GM23248 (cell line): ENCODE measurements at regions of chr1 and their contacts with region 1.

Region 1: DNA sequence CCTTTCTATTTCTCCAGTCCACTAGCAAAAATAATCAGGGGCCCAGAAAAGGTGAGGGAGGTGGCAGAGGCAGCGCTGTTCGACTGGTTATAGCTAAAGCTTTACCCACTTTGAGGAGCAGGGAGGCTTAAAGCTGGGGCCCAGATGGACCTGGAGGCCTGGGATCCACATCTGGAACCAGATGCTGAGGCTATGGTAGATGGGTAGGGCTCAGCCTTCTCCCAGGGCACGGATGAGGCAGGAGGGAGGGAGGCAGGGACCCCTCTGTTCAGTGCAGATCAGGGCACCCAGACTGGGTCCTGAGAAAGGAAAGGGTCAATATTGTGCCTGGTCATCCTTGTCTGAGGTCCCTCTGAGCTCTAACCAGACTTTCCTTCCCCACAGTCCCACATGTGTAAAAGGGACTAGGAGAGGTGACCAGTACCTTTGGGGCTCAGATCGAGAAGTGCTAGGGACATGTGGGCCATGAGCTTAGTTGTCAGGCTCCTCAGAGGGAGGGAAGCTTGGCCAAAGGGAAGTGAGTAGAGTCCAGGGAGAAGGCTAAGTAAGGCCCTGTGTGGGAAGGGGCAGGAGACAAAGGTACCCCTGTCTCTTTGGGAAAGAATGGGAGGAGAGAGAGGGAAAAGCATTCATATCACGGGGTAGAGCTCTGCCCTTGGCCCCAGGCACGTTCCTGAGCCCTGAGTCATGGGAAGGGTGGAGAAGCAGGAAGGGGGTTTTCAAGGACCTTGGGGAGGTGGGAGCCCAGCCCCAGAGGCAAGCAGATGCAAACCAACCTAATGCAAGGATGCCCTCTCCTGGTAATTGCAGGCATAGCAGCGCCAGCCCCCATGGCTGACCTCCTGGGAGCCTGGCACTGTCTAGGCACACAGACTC is 15.4 kb downstream of the LMNA start:
- DNase-seq: peak; percentile 96
- H3K4me3 ChIP-seq: peak overlapping the region; percentile 58
- H3K27ac ChIP-seq: peak overlapping the region; percentile 100
- H3K4me1 ChIP-seq: peaks cover 49% of the 10 kb centered on the region
- H3K27me3 ChIP-seq: no peaks in the 10 kb centered on the region

Region 2: DNA sequence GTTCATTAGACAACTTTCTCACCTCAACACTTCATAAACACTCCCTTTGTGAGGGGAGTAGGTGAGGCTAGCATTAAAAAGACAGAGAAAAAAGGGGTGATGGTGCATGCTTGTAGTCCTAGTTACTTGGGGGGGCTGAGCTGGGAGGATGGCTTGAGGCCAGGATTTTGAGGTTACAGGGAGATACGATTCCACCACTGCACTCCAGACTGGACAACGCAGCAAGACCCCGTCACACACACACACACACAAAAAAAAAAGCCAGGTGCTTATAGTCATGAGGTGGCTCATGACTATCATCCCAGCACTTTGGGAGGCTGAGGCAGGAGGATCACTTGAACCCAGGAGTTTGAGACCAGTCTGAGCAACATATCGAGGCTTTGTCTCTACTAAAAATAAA is 302.5 kb before region 1 on chr1:
- in situ Hi-C with region 1: no loop called
- DNase-seq: no peak
- H3K4me3 ChIP-seq: no peak overlapping the region
- H3K27ac ChIP-seq: no peak overlapping the region
- H3K4me1 ChIP-seq: no peaks in the 10 kb centered on the region
- H3K27me3 ChIP-seq: no peaks in the 10 kb centered on the region

Region 3: DNA sequence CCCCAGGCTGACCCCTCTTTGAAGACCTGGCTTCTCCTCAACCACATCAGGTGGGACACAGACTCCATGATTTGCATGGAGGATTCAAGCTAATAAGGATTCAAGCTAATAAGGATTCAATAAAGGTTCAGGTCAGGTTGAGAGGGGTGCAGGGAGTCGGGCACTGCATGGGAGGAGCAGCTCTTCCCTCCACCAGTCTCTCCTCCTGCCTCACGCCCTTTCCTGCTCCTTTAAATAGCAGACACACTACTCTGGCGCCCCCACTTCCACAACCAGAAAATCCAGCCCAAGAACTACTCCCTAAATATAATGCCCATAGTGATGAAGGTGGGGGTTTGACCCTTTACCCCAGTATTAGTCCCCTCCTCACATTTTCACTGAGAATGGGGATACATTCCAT is 54.8 kb before region 1 on chr1:
- in situ Hi-C with region 1: no loop called
- DNase-seq: no peak
- H3K4me3 ChIP-seq: no peak overlapping the region
- H3K27ac ChIP-seq: no peak overlapping the region
- H3K4me1 ChIP-seq: no peaks in the 10 kb centered on the region
- H3K27me3 ChIP-seq: no peaks in the 10 kb centered on the region

Region 4: GRCh38 chr1:156096640-156097391 is 33.1 kb before region 1 on chr1:
- in situ Hi-C with region 1: loop called (anchors 5 kb)
- DNase-seq: peak; percentile 94
- H3K4me3 ChIP-seq: no peak overlapping the region
- H3K27ac ChIP-seq: peak overlapping the region; percentile 82
- H3K4me1 ChIP-seq: peaks cover 15% of the 10 kb centered on the region
- H3K27me3 ChIP-seq: no peaks in the 10 kb centered on the region

Region 5: DNA sequence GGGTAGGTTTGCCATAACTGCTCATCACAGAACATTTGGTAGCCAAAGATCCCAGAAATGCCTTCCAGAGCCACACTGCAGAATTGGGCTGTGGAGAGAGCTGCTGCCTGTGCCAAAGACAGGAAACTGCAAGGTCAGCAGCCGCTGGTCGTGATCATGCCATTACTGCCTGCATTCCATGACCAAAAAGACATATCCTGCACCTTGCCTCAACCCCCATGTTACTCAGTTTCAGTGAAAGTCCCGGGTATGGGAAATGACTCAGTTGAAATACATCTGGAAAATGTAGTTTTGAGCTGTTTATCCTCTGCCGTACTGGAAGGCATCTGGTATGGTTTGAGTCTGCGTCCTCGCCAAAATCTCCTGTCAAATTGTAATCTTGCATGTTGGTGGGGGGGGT is 1260.7 kb after region 1 on chr1:
- in situ Hi-C with region 1: no loop called
- DNase-seq: peak; percentile 75
- H3K4me3 ChIP-seq: no peak overlapping the region
- H3K27ac ChIP-seq: no peak overlapping the region
- H3K4me1 ChIP-seq: peaks cover 11% of the 10 kb centered on the region
- H3K27me3 ChIP-seq: no peaks in the 10 kb centered on the region

Region 6: DNA sequence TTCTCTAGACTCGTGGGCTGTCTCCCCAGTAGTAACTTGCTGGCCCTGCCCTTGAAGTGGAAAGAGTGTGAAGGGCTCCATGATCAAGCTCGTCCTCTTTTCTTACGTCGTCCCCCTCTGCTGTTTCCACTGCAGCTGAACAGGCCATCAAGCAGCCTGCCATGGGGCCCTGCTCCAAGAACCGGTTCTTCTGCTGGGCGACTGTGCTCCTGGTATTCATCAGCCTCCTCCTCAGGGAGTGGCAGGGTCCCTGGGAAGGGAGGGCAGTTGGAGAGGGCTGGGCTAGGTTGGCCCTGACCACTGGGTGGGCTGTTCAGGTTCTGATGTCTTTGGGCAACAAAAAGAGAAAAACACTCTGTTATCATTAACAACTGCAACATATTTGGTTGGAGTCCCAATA is 1270.8 kb after region 1 on chr1:
- in situ Hi-C with region 1: no loop called
- DNase-seq: no peak
- H3K4me3 ChIP-seq: no peak overlapping the region
- H3K27ac ChIP-seq: no peak overlapping the region
- H3K4me1 ChIP-seq: no peaks in the 10 kb centered on the region
- H3K27me3 ChIP-seq: peaks cover 13% of the 10 kb centered on the region; the same call in 1 of the 2 replicates